ENCODE measurements at regions of chr21 and their contacts with region 1.

Region 1: DNA sequence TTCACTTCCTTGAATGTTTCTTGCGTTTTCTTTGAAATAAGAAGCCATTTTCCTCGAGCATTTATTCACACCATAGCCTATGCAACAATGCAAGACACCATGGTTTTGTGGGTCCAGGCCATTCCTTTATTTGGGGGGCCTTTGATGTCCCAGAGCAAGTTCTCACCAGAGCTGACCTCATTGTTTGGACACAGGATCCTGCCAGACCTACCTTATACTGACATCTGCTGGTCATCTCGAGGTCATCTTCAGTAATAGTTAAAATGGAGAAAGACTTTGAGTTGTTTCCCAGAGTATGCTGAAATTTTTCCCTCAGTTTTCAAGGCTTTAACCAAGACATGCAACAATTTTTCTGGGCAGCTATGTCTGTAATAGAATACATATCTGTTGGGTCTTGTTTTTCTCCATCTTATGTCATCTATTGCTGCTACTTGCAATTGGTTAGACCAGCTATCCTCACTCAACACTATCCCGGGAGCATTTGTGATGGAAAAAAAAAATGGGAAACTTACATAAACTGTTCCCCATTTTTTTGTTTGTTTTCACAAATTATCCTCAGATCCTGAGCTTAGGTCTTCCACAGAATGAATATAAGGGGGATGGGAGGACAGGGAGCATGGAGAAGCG is 34.0 kb upstream of the BACE2 start:
- DNase-seq: no peak
- ATAC-seq: peak; percentile 59; the same call in 2 of the 3 replicates
- H3K4me3 ChIP-seq: no peak overlapping the region
- H3K27ac ChIP-seq: no peak overlapping the region
- H3K4me1 ChIP-seq: no peaks in the 10 kb centered on the region
- H3K27me3 ChIP-seq: no peaks in the 10 kb centered on the region
- CTCF ChIP-seq: peak; percentile 40 to 58 (median 53); a peak in 5 of 6 replicates
- EP300 ChIP-seq: no peak
- POLR2A ChIP-seq: no peak
- RAD21 ChIP-seq: peak; percentile 36; the same call in 1 of the 2 replicates

Region 2: GRCh38 chr21:39527664-39528381 is 1606.2 kb before region 1 on chr21:
- CTCF ChIA-PET with region 1: no interaction called
- POLR2A ChIA-PET with region 1: no interaction called
- RAD21 ChIA-PET with region 1: no interaction called
- SMC1A ChIA-PET with region 1: no interaction called
- in situ Hi-C with region 1: loop called (anchors 10 kb)
- intact Hi-C with region 1: no loop called
- DNase-seq: no peak
- ATAC-seq: no peak
- H3K4me3 ChIP-seq: no peak overlapping the region
- H3K27ac ChIP-seq: no peak overlapping the region
- H3K4me1 ChIP-seq: no peaks in the 10 kb centered on the region
- H3K27me3 ChIP-seq: no peaks in the 10 kb centered on the region
- CTCF ChIP-seq: no peak
- EP300 ChIP-seq: no peak
- POLR2A ChIP-seq: no peak
- RAD21 ChIP-seq: no peak

Region 3: GRCh38 chr21:41121785-41122421 is 12.1 kb before region 1 on chr21:
- CTCF ChIA-PET with region 1: interaction called, 45 read pairs
- POLR2A ChIA-PET with region 1: no interaction called
- RAD21 ChIA-PET with region 1: interaction called, 6 read pairs
- SMC1A ChIA-PET with region 1: no interaction called
- in situ Hi-C with region 1: no loop called
- intact Hi-C with region 1: no loop called
- DNase-seq: peak; percentile 1
- ATAC-seq: peak; percentile 59
- H3K4me3 ChIP-seq: no peak overlapping the region
- H3K27ac ChIP-seq: no peak overlapping the region
- H3K4me1 ChIP-seq: no peaks in the 10 kb centered on the region
- H3K27me3 ChIP-seq: no peaks in the 10 kb centered on the region
- CTCF ChIP-seq: peak; percentile 69 to 71 (median 69); a peak in 5 of 6 replicates
- EP300 ChIP-seq: no peak
- POLR2A ChIP-seq: no peak
- RAD21 ChIP-seq: peak; percentile 62

Region 4: DNA sequence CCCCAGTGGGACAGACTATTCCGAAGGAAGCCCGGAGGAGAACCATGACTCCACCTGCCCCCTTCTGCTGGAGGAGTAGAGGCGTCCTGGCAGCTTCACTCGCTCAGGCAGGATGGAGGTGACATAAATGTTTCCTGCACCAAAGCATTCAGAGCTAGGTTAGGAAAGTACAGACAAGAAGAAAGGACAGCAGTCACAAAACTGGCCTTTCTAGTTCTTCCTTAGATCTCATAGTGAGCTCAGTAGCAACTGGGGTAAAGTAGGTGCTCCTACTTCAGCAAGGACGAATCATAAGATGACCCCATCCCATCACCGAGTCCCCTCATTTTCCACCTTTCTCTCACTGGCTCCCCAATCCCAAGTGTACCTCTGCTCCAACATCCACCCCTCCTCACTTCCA is 10.7 kb after region 1 on chr21:
- CTCF ChIA-PET with region 1: no interaction called
- POLR2A ChIA-PET with region 1: no interaction called
- RAD21 ChIA-PET with region 1: no interaction called
- SMC1A ChIA-PET with region 1: no interaction called
- in situ Hi-C with region 1: no loop called
- intact Hi-C with region 1: no loop called
- DNase-seq: no peak
- ATAC-seq: no peak
- H3K4me3 ChIP-seq: no peak overlapping the region
- H3K27ac ChIP-seq: no peak overlapping the region
- H3K4me1 ChIP-seq: no peaks in the 10 kb centered on the region
- H3K27me3 ChIP-seq: no peaks in the 10 kb centered on the region
- CTCF ChIP-seq: no peak
- EP300 ChIP-seq: no peak
- POLR2A ChIP-seq: no peak
- RAD21 ChIP-seq: no peak

Region 5: DNA sequence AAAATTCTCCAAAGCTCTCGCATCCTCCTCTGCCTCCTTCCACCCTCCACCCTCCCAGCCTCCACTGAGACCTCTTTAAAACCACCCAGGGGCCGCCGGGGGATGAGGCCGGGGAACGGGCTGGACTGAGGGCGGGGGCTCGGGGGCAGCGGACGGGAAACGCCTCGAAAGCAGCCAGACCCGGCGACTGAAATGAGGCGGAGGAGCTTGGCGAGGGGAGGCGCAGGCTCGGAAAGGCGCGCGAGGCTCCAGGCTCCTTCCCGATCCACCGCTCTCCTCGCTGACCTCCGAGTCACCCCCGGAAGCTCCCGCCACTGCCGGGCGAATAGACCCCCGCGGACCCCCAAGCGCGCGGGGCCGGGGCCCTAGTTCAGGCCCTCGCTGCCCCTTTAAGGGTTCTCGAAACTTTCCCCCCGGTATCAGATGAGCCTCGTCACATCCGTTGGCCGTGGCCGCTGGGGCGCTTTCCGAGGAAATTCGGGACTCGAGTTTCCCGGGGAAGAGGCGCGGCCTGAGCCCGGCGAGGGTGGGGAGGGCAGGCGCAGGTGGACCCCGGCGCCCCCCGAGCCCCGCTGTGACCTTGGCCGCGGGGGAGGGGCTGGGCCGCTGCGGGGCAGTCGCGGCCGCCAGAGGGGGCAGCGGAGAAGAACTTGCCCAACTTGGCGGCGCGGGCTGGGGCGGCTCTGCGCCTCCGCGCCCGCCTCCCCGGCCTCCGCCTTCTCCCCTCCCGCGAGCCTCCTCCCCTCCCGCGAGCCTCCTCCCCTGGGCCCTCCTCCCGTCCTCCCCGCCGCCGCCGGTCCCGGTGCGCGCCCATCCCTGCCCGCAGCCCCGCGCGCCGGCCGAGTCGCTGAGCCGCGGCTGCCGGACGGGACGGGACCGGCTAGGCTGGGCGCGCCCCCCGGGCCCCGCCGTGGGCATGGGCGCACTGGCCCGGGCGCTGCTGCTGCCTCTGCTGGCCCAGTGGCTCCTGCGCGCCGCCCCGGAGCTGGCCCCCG is 33.6 kb after region 1 on chr21 and contains the start of gene BACE2:
- CTCF ChIA-PET with region 1: no interaction called
- POLR2A ChIA-PET with region 1: no interaction called
- RAD21 ChIA-PET with region 1: no interaction called
- SMC1A ChIA-PET with region 1: no interaction called
- in situ Hi-C with region 1: no loop called
- intact Hi-C with region 1: no loop called
- DNase-seq: no peak
- ATAC-seq: peak; percentile 86
- H3K4me3 ChIP-seq: peak within 1 kb of the TSS; percentile 61; the same call in 1 of the 2 replicates
- H3K27ac ChIP-seq: no peak within 1 kb of the TSS
- H3K4me1 ChIP-seq: no peaks in the 10 kb centered on the region
- H3K27me3 ChIP-seq: peaks cover 0 to 7% of the 10 kb centered on the region in 2 experiments
- CTCF ChIP-seq: peak in 2 of 3 experiments; percentile 33 to 39; a peak in 3 of 6 replicates
- EP300 ChIP-seq: no peak
- POLR2A ChIP-seq: no peak
- RAD21 ChIP-seq: no peak
- polyA plus RNA-seq, gene BACE2: 0.04 to 0.31 TPM

Region 6: GRCh38 chr21:41802684-41803083 is 668.7 kb after region 1 on chr21:
- CTCF ChIA-PET with region 1: no interaction called
- POLR2A ChIA-PET with region 1: no interaction called
- RAD21 ChIA-PET with region 1: no interaction called
- SMC1A ChIA-PET with region 1: no interaction called
- in situ Hi-C with region 1: no loop called
- intact Hi-C with region 1: no loop called
- DNase-seq: no peak
- ATAC-seq: no peak
- H3K4me3 ChIP-seq: no peak overlapping the region
- H3K27ac ChIP-seq: no peak overlapping the region
- H3K4me1 ChIP-seq: no peaks in the 10 kb centered on the region
- H3K27me3 ChIP-seq: no peaks in the 10 kb centered on the region
- CTCF ChIP-seq: no peak
- EP300 ChIP-seq: no peak
- POLR2A ChIP-seq: no peak
- RAD21 ChIP-seq: no peak

Measured in GM12878 (cell line).